K562 (cell line): ENCODE measurements at regions of chr4 and their contacts with region 1.

Region 1: DNA sequence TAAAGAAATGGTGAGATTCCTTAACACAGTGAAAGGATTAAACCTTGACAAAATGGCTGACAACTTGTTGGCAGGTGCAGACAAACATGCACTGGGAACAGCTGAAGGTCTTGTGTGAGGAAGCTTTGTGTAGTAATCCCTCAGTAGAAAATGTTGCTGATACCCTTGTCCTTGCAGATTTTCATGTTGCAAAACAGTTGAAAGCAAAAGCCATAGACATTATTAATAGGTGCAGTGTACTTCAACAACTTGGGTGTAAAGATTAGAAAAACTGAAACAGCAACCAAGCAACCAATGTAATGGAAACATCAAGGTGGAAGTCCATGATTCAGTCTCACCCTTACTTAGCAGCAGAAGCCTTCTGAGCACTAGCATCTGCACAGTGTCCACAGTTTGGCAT is 29.8 kb downstream of the UGT2B7 start:
- DNase-seq: no peak
- ATAC-seq: no peak
- H3K4me3 ChIP-seq: no peak overlapping the region
- H3K27ac ChIP-seq: no peak overlapping the region
- H3K4me1 ChIP-seq: no peaks in the 10 kb centered on the region
- H3K27me3 ChIP-seq: no peaks in the 10 kb centered on the region
- CTCF ChIP-seq: no peak
- EP300 ChIP-seq: no peak
- POLR2A ChIP-seq: no peak
- RAD21 ChIP-seq: no peak

Region 2: GRCh38 chr4:68883870-68884269 is 242.2 kb before region 1 on chr4:
- CTCF ChIA-PET with region 1: no interaction called
- POLR2A ChIA-PET with region 1: no interaction called
- in situ Hi-C with region 1: no loop called
- intact Hi-C with region 1: loop called (anchors 2 kb)
- DNase-seq: no peak
- ATAC-seq: no peak
- H3K4me3 ChIP-seq: no peak overlapping the region
- H3K27ac ChIP-seq: no peak overlapping the region
- H3K4me1 ChIP-seq: no peaks in the 10 kb centered on the region
- H3K27me3 ChIP-seq: no peaks in the 10 kb centered on the region
- CTCF ChIP-seq: no peak
- EP300 ChIP-seq: no peak
- POLR2A ChIP-seq: no peak
- RAD21 ChIP-seq: no peak